AG04449 (cell line): ENCODE measurements at regions of chr14 and their contacts with region 1.

Region 1: GRCh38 chr14:69574263-69574953 is at the start of gene CCDC177:
- DNase-seq: no peak
- H3K4me3 ChIP-seq: peak within 1 kb of the TSS; percentile 42
- CTCF ChIP-seq: peak; percentile 90

Region 2: GRCh38 chr14:69483765-69484443 is 90.5 kb before region 1 on chr14:
- CTCF ChIA-PET with region 1: no interaction called
- POLR2A ChIA-PET with region 1: no interaction called
- DNase-seq: no peak
- H3K4me3 ChIP-seq: no peak overlapping the region
- CTCF ChIP-seq: no peak

Region 3: DNA sequence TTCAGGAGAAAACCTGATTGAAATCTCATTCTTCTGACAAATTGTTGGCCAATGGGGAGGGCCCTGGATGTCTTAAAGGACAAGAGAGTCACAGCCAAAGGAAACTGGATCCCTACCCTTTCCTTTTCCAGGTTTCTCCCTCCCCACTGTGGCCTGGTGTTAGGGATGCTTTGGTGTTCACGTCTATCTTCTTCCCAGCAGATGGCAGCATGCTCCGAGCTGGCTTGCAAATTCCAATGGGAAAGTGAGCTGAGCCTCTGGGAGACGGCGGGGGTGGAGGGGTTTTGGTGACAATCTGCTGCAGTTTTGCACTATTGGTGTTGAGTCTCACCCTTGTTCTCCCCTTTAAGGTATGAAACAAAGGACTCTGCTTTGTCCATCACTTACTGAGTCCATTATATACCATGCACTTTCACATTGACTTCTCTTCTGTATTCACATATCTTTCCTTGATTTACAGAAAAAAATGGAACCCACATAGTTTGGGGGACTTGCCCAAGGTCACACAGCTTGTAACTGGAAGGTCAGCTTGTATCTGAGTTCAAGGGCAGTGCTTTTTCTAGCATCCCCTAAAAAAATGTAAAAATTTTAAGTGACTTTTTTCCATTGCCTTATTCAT is 39.1 kb before region 1 on chr14:
- CTCF ChIA-PET with region 1: interaction called, 36 read pairs
- POLR2A ChIA-PET with region 1: no interaction called
- DNase-seq: no peak
- H3K4me3 ChIP-seq: no peak overlapping the region
- CTCF ChIP-seq: peak; percentile 80

Region 4: DNA sequence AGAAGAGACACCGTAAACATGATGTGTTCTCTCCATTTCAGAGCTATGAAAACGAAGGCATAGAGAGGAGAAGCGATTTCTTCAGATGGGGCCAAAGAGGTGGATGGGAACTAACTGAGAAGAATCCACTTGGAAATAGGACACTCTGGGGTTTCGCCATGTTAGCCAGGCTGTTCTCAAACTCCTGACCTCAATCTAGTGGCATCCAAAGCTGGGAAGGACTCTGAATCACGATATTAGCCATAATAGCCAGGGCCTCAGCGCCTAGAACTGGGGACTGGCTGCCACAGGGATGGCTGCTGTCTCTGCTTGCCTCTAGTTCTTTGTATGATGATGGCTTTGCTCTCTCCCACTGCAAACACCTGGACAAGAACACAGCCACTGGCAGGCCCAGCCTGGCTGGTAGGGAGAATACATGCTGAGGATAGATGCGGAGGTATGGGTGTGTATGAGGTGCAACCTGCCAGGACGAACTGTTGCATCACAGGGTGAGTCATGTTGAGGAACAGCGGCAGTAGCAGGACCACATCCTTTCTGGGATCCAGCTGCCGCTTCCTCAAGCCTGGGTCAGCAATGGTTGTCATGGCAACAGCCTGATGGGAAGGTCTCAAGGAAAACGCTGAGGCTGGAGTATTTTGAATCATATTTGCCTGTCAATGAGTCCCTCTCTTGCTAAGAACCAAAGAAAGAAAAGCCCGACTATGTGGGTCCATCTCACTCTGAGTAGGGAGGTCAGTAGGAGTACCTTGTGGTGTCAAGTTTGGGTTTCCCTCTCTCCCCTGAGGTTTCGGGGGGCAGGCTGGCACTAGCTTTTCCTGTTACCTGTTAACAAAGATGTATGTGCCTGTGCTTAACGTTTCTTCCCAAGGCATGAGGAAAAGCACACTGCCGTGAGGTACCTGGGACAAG is 30.8 kb before region 1 on chr14:
- CTCF ChIA-PET with region 1: interaction called, 31 read pairs
- POLR2A ChIA-PET with region 1: no interaction called
- DNase-seq: no peak
- H3K4me3 ChIP-seq: no peak overlapping the region
- CTCF ChIP-seq: no peak

Region 5: GRCh38 chr14:69553221-69553620 is 21.2 kb before region 1 on chr14:
- CTCF ChIA-PET with region 1: interaction called, 31 read pairs
- POLR2A ChIA-PET with region 1: no interaction called
- DNase-seq: no peak
- H3K4me3 ChIP-seq: no peak overlapping the region
- CTCF ChIP-seq: no peak

Region 6: GRCh38 chr14:69559581-69560011 is 14.8 kb before region 1 on chr14:
- CTCF ChIA-PET with region 1: interaction called, 55 read pairs
- POLR2A ChIA-PET with region 1: no interaction called
- DNase-seq: no peak
- H3K4me3 ChIP-seq: no peak overlapping the region
- CTCF ChIP-seq: no peak

Region 7: GRCh38 chr14:69586404-69586803 is 12.0 kb after region 1 on chr14:
- CTCF ChIA-PET with region 1: interaction called, 23 read pairs
- POLR2A ChIA-PET with region 1: no interaction called
- DNase-seq: no peak
- H3K4me3 ChIP-seq: no peak overlapping the region
- CTCF ChIP-seq: no peak